Mammary epithelial cell (primary cell): ENCODE measurements at regions of chr3 and their contacts with region 1.

Region 1: DNA sequence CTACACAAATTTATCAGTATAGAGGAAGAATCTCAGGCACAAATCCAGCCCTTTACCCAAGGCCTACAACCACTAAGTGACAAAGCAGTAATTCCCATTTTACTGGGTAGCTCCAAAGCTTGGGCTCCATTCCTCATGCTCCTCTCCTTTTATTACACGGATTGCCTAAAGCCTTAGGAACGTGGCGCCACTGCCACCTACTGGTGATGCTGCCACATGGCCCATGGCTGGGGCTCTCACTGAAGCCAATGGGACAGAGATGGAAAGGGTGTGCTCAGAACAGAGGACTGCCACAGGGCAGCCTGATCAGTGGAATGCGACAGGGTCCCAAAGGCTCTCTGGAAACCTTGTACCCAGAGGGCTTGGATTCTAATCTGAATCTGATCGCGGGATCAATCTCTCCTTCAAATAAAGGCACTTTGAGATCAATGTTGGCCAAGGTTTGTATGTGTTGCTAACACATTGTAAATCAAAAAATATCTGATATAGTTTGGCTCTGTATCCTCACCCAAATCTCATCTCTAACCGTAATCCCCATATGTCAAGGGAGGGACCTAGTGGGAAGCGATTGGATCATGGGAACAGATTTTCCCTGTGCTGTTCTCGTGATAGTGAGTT is 33.5 kb upstream of the LYZL4 start:
- DNase-seq: peak; percentile 65
- H3K4me3 ChIP-seq: no peak overlapping the region
- H3K27ac ChIP-seq: no peak overlapping the region
- H3K4me1 ChIP-seq: no peaks in the 10 kb centered on the region
- H3K27me3 ChIP-seq: no peaks in the 10 kb centered on the region
- CTCF ChIP-seq: peak; percentile 99

Region 2: GRCh38 chr3:41893977-41894376 is 550.0 kb before region 1 on chr3:
- CTCF ChIA-PET with region 1: no interaction called
- dilution Hi-C with region 1: no loop called
- in situ Hi-C with region 1: loop called in 1 of 2 experiments (anchors 25 kb)
- intact Hi-C with region 1: loop called (anchors 1 kb)
- DNase-seq: peak; percentile 36
- H3K4me3 ChIP-seq: no peak overlapping the region
- H3K27ac ChIP-seq: no peak overlapping the region
- H3K4me1 ChIP-seq: no peaks in the 10 kb centered on the region
- H3K27me3 ChIP-seq: no peaks in the 10 kb centered on the region
- CTCF ChIP-seq: peak; percentile 29 to 54

Region 3: DNA sequence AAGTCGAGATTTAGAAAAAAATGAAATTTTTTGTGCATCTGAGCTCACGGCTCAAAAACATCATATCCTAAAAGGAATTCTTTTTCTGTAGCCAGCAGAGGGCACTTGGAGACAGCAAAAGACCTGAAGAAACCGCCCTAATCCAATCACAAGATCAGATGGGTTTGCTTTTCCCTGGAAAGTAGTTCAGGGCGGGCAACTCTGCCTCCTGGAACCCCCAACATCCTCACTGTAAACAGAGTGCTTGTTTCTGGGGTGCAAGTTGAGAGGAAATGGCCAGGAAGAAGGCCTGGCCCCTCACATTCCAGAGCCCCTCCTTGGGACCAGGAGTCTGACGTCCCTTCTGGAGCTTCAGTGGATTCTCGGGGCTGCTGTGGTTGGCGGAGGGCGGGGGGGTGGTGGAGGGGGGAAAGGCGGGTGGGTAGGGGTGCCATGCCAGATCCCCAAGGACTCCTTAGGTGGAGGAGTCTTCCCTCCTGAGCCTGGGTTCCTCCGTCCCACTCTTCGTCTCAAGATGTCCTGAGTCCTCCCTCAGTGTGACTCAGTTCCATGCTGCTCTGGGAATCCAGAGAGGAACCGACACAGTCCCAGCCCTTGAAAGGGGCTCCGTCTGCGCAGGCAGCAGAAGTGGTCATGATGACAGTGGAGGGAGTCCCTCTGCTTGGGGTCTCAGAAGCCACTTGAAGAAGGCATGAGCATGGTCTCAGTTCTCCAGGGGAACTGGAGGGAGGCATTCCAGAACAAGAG is 213.8 kb before region 1 on chr3:
- CTCF ChIA-PET with region 1: interaction called, 8 read pairs
- dilution Hi-C with region 1: no loop called
- in situ Hi-C with region 1: no loop called
- intact Hi-C with region 1: loop called (anchors 1 kb)
- DNase-seq: peak; percentile 45
- H3K4me3 ChIP-seq: no peak overlapping the region
- H3K27ac ChIP-seq: no peak overlapping the region
- H3K4me1 ChIP-seq: peaks cover 9% of the 10 kb centered on the region
- H3K27me3 ChIP-seq: no peaks in the 10 kb centered on the region
- CTCF ChIP-seq: peak; percentile 51 to 65

Region 4: DNA sequence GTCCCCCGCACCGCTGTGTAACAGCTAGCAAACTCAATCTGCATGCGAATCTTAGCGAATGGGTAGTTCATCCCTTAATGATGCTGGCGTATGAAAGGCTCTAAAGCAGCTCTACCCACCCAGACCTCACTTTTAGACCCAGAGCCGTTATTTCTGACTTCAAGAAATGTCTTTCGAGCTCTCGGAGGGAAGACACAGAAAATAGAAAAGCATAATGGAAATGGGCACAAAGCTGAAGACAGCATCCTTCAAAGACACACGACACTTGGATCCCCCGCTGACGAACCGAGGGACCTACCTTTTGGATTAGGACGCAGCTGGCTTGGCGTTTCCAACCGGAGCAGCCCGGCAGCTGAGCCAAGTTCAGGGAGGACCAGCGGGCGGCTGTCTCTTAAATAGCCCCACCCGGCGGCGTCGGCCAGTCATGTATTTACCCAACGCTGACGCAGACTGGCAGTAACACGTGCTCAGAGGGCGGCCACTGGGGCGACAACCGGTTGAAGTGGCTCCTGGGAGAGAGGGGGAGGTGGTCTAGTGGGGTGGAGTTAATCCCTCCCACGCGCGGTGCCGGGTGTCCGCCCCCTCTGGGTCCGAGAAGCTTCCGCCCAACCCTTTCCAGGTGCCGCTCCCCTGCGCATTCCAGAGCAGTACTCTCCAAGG is 179.4 kb before region 1 on chr3:
- CTCF ChIA-PET with region 1: interaction called, 3 read pairs
- dilution Hi-C with region 1: loop called (anchors 25 kb)
- in situ Hi-C with region 1: no loop called
- intact Hi-C with region 1: no loop called
- DNase-seq: no peak
- H3K4me3 ChIP-seq: peak overlapping the region in 1 of 3 experiments; percentile 11
- H3K27ac ChIP-seq: no peak overlapping the region
- H3K4me1 ChIP-seq: peaks cover 32% of the 10 kb centered on the region
- H3K27me3 ChIP-seq: peaks cover 11% of the 10 kb centered on the region
- CTCF ChIP-seq: no peak

Region 5: GRCh38 chr3:42502429-42503250 is 58.7 kb after region 1 on chr3 and contains the start of gene VIPR1:
- CTCF ChIA-PET with region 1: no interaction called
- dilution Hi-C with region 1: no loop called
- in situ Hi-C with region 1: no loop called
- intact Hi-C with region 1: no loop called
- DNase-seq: peak; percentile 80
- H3K4me3 ChIP-seq: peak within 1 kb of the TSS; percentile 34 to 68 (median 46)
- H3K27ac ChIP-seq: no peak within 1 kb of the TSS
- H3K4me1 ChIP-seq: peaks cover 14% of the 10 kb centered on the region
- H3K27me3 ChIP-seq: no peaks in the 10 kb centered on the region
- CTCF ChIP-seq: no peak
- total RNA-seq, gene VIPR1: 4.7 to 21.3 TPM

Region 6: DNA sequence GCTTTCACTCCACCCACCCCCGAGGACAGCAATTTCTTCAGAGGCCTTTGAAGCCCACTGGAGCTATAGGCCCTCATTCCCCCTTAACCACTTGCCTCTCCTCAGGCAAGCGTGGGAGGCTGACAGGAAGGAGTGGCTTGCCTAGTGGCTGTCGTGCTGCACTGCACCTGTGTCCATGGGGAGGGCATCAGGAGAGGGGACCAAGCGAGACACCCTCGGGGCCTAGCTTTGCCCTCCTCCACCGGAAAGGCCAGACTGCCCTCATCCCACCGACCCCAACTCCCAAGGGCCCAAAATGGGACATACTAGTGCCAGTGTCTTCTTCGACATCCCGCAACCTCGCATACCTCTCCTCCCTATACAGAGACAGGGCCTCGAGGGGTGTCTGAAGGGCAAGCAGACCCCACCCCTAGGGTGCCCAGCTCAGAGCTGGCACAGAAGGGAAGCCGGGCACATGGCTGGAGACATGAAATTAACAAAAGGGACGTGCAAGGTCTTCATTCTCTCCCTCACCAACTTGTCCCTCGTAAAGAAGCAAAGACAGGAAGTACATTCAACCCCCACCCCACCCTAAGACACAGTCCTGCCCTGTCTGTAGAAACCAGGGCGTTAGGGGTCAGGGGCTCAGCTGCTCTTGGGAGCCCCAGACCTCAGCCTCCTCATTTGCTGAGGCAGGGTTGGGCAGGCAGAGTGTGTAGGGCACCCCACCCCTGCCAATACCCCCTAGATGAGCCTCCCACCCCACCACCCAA is 82.9 kb after region 1 on chr3:
- CTCF ChIA-PET with region 1: no interaction called
- dilution Hi-C with region 1: loop called (anchors 5 kb)
- in situ Hi-C with region 1: no loop called
- intact Hi-C with region 1: no loop called
- DNase-seq: no peak
- H3K4me3 ChIP-seq: no peak overlapping the region
- H3K27ac ChIP-seq: no peak overlapping the region
- H3K4me1 ChIP-seq: peaks cover 2% of the 10 kb centered on the region
- H3K27me3 ChIP-seq: no peaks in the 10 kb centered on the region
- CTCF ChIP-seq: no peak

Region 7: GRCh38 chr3:42831321-42831713 is 387.4 kb after region 1 on chr3:
- CTCF ChIA-PET with region 1: no interaction called
- dilution Hi-C with region 1: no loop called
- in situ Hi-C with region 1: no loop called
- intact Hi-C with region 1: loop called (anchors 1 kb)
- DNase-seq: peak; percentile 56
- H3K4me3 ChIP-seq: no peak overlapping the region
- H3K27ac ChIP-seq: no peak overlapping the region
- H3K4me1 ChIP-seq: peaks cover 30% of the 10 kb centered on the region
- H3K27me3 ChIP-seq: no peaks in the 10 kb centered on the region
- CTCF ChIP-seq: peak; percentile 80 to 86